MCF 10A (cell line): ENCODE measurements at regions of chr1 and their contacts with region 1.

Region 1: DNA sequence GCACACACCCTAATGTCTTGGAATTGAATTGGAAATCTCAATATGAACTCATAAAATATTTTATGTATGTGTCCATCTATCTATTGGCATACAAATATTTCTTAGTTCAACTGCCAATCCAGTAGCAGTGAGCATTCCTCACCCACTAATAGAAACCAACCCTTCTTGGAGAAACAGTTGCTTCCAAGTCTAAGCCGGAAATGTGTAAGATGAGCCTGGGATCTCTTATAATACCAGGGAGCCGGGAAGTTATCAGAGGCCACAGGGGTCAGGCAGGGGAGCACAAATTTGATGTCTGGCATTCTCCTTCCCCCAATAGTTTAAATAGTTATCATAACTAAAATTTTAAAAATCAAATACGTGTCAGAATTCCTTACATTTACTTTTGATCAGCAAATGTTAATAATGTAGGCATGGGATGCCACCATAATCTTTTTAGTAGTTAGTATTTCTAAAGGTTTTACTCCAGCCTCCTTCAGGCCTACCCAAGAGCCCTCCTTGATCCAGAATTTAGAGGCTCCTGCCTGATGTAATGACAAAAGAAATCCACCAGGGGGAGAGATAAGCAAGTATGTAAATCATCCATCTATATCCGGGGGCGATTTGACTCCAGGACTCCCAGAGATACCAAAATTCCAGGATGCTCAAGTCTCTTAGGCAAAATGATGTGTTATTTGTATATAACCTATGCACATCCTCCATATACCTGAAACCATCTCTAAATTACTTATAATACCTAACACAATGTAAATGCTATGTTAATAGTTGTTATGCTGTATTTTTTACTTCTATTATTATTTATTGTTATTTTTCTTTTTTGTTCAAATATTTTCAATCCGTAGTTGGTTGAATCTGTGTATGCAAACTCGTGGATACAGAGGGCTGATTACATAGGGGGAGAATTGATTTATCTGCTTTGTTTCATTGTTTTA is 218.7 kb upstream of the COA6 start:
- DNase-seq: peak; percentile 94
- H3K4me3 Mint-ChIP-seq: no peak overlapping the region
- H3K27ac Mint-ChIP-seq: peak overlapping the region; percentile 20
- H3K4me1 Mint-ChIP-seq: peaks cover 2% of the 10 kb centered on the region
- H3K27me3 Mint-ChIP-seq: no peaks in the 10 kb centered on the region
- CTCF ChIP-seq: peak; percentile 99

Region 2: GRCh38 chr1:234065794-234066447 is 88.7 kb before region 1 on chr1:
- CTCF ChIA-PET with region 1: no interaction called
- POLR2A ChIA-PET with region 1: no interaction called
- intact Hi-C with region 1: no loop called
- DNase-seq: peak; percentile 89
- H3K4me3 Mint-ChIP-seq: no peak overlapping the region
- H3K27ac Mint-ChIP-seq: no peak overlapping the region
- H3K4me1 Mint-ChIP-seq: peaks cover 5% of the 10 kb centered on the region
- H3K27me3 Mint-ChIP-seq: no peaks in the 10 kb centered on the region
- CTCF ChIP-seq: peak; percentile 98

Region 3: DNA sequence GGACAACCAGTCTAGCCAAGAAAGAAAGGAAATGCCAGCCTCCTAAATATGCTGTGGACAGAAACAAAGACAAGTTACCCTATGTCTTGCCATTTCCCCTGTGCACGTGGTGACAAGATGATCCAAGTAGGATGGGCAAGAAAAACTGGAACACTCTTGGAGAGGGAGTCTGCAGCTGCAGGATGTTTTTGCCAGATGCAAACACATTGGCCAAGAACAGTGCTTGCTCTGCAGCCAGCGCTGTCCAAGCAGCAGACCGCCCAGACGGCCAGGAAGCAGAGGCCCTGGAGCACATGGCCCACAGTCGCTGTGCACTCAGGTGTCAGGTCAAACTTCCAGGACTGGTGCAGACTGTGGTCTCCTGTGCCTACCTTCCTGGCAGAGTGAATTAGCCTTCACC is 60.8 kb before region 1 on chr1:
- CTCF ChIA-PET with region 1: no interaction called
- POLR2A ChIA-PET with region 1: no interaction called
- intact Hi-C with region 1: no loop called
- DNase-seq: no peak
- H3K4me3 Mint-ChIP-seq: no peak overlapping the region
- H3K27ac Mint-ChIP-seq: no peak overlapping the region
- H3K4me1 Mint-ChIP-seq: peaks cover 5% of the 10 kb centered on the region
- H3K27me3 Mint-ChIP-seq: no peaks in the 10 kb centered on the region
- CTCF ChIP-seq: no peak

Region 4: GRCh38 chr1:234206651-234207284 is 52.2 kb after region 1 on chr1:
- CTCF ChIA-PET with region 1: interaction called, 6 read pairs
- POLR2A ChIA-PET with region 1: no interaction called
- intact Hi-C with region 1: loop called (anchors 2 kb)
- DNase-seq: peak; percentile 99
- H3K4me3 Mint-ChIP-seq: peak overlapping the region; percentile 34
- H3K27ac Mint-ChIP-seq: no peak overlapping the region
- H3K4me1 Mint-ChIP-seq: peaks cover 20% of the 10 kb centered on the region
- H3K27me3 Mint-ChIP-seq: no peaks in the 10 kb centered on the region
- CTCF ChIP-seq: no peak

Region 5: DNA sequence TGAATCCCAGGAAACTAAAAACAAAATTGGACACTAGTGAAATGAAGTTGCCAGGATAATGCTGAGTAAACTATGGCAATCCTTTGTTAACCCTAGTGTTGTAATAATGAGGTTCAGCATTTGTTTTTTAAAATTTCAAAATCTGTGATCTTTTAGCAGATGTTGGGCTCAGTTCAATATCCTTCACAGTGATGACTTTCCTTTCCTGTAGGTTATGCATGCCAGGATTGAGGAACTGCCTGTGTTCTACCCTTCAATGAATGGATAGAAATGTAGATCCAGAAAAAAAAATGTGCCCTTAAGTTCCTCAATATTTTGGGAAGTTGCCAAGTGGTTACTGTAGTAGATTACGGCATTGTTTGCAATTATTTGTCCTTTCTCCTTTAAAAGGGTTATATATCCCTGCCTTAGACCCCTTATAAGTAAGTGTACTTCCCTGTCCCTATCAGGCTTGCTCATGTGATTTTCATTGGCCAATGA is 490.9 kb after region 1 on chr1:
- CTCF ChIA-PET with region 1: no interaction called
- POLR2A ChIA-PET with region 1: no interaction called
- intact Hi-C with region 1: no loop called
- DNase-seq: no peak
- H3K4me3 Mint-ChIP-seq: no peak overlapping the region
- H3K27ac Mint-ChIP-seq: no peak overlapping the region
- H3K4me1 Mint-ChIP-seq: peaks cover 16% of the 10 kb centered on the region
- H3K27me3 Mint-ChIP-seq: no peaks in the 10 kb centered on the region
- CTCF ChIP-seq: no peak